Naive thymus-derived CD4-positive, alpha-beta T cell (primary cell): ENCODE measurements at regions of chr1 and their contacts with region 1.

Region 1: GRCh38 chr1:244302889-244303613 is 148.7 kb downstream of the ADSS2 start:
- DNase-seq: no peak
- ATAC-seq: no peak
- H3K4me3 ChIP-seq: no peak overlapping the region
- H3K4me3 Mint-ChIP-seq: no peak overlapping the region
- H3K27ac ChIP-seq: no peak overlapping the region
- H3K27ac Mint-ChIP-seq: peak overlapping the region in 3 of 9 donors; percentile 4 to 43 (median 7)
- H3K4me1 ChIP-seq: peaks cover 0 to 3% of the 10 kb centered on the region in 2 donors
- H3K4me1 Mint-ChIP-seq: peaks cover 5 to 13% (median 7%) of the 10 kb centered on the region in 7 donors
- H3K27me3 ChIP-seq: no peaks in the 10 kb centered on the region
- H3K27me3 Mint-ChIP-seq: peaks cover 0 to 2% (median 0%) of the 10 kb centered on the region in 5 donors

Region 2: GRCh38 chr1:243814718-243815117 is 488.3 kb before region 1 on chr1:
- CTCF ChIA-PET with region 1: interaction called, 10 read pairs
- POLR2A ChIA-PET with region 1: no interaction called
- intact Hi-C with region 1: no loop called
- DNase-seq: no peak
- ATAC-seq: no peak
- H3K4me3 ChIP-seq: no peak overlapping the region
- H3K4me3 Mint-ChIP-seq: no peak overlapping the region
- H3K27ac ChIP-seq: no peak overlapping the region
- H3K27ac Mint-ChIP-seq: peak overlapping the region in 1 of 9 donors; percentile 2
- H3K4me1 ChIP-seq: no peaks in the 10 kb centered on the region
- H3K4me1 Mint-ChIP-seq: peaks cover 2 to 35% (median 23%) of the 10 kb centered on the region in 7 donors
- H3K27me3 ChIP-seq: no peaks in the 10 kb centered on the region
- H3K27me3 Mint-ChIP-seq: no peaks in the 10 kb centered on the region

Region 3: GRCh38 chr1:243864913-243865312 is 438.1 kb before region 1 on chr1:
- CTCF ChIA-PET with region 1: no interaction called
- POLR2A ChIA-PET with region 1: no interaction called
- intact Hi-C with region 1: no loop called
- DNase-seq: no peak
- ATAC-seq: no peak
- H3K4me3 ChIP-seq: no peak overlapping the region
- H3K4me3 Mint-ChIP-seq: no peak overlapping the region
- H3K27ac ChIP-seq: no peak overlapping the region
- H3K27ac Mint-ChIP-seq: no peak overlapping the region
- H3K4me1 ChIP-seq: no peaks in the 10 kb centered on the region
- H3K4me1 Mint-ChIP-seq: no peaks in the 10 kb centered on the region
- H3K27me3 ChIP-seq: no peaks in the 10 kb centered on the region
- H3K27me3 Mint-ChIP-seq: peaks cover 0 to 3% (median 1%) of the 10 kb centered on the region in 5 donors

Region 4: DNA sequence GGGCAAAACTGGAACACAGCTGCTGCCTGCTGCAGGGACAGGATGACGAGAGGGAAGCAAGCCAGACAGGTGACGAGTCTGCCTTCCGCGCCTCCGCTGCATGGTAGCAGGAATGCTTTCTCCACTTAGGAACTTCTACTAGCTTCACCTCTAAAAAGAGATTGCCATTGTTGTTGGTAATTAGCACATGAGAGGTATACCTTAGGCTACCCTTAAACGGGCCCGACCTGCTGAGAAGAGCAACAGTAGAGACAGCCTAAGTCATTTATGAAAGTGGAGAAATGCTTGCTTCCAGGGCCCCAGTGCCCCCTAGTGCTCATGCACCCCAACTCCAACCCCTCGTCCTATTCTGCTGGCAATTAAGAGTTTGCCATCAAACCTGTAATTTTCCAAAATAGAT is 356.1 kb before region 1 on chr1:
- CTCF ChIA-PET with region 1: no interaction called
- POLR2A ChIA-PET with region 1: no interaction called
- intact Hi-C with region 1: loop called in 1 of 2 experiments (anchors 1 kb)
- DNase-seq: peak in 6 of 9 donors; percentile 11 to 52 (median 38)
- ATAC-seq: peak; percentile 76
- H3K4me3 ChIP-seq: no peak overlapping the region
- H3K4me3 Mint-ChIP-seq: no peak overlapping the region
- H3K27ac ChIP-seq: no peak overlapping the region
- H3K27ac Mint-ChIP-seq: peak overlapping the region in 1 of 9 donors; percentile 17
- H3K4me1 ChIP-seq: no peaks in the 10 kb centered on the region
- H3K4me1 Mint-ChIP-seq: no peaks in the 10 kb centered on the region
- H3K27me3 ChIP-seq: no peaks in the 10 kb centered on the region
- H3K27me3 Mint-ChIP-seq: peaks cover 0 to 8% (median 5%) of the 10 kb centered on the region in 5 donors

Region 5: GRCh38 chr1:244289976-244290375 is 13.1 kb before region 1 on chr1:
- CTCF ChIA-PET with region 1: interaction called, 10 read pairs
- POLR2A ChIA-PET with region 1: no interaction called
- intact Hi-C with region 1: no loop called
- DNase-seq: no peak
- ATAC-seq: no peak
- H3K4me3 ChIP-seq: no peak overlapping the region
- H3K4me3 Mint-ChIP-seq: no peak overlapping the region
- H3K27ac ChIP-seq: no peak overlapping the region
- H3K27ac Mint-ChIP-seq: no peak overlapping the region
- H3K4me1 ChIP-seq: no peaks in the 10 kb centered on the region
- H3K4me1 Mint-ChIP-seq: peaks cover 0 to 14% (median 9%) of the 10 kb centered on the region in 7 donors
- H3K27me3 ChIP-seq: no peaks in the 10 kb centered on the region
- H3K27me3 Mint-ChIP-seq: peaks cover 0 to 25% (median 11%) of the 10 kb centered on the region in 5 donors

Region 6: GRCh38 chr1:244319283-244320132 is 16.5 kb after region 1 on chr1:
- CTCF ChIA-PET with region 1: no interaction called
- POLR2A ChIA-PET with region 1: no interaction called
- intact Hi-C with region 1: loop called in 1 of 2 experiments (anchors 1 kb)
- DNase-seq: peak in 1 of 9 donors; percentile 62
- ATAC-seq: peak; percentile 86
- H3K4me3 ChIP-seq: peak overlapping the region; percentile 9
- H3K4me3 Mint-ChIP-seq: peak overlapping the region in 4 of 10 donors; percentile 20 to 76 (median 36)
- H3K27ac ChIP-seq: no peak overlapping the region
- H3K27ac Mint-ChIP-seq: peak overlapping the region in 6 of 9 donors; percentile 20 to 87 (median 53)
- H3K4me1 ChIP-seq: peaks cover 0 to 51% of the 10 kb centered on the region in 2 donors
- H3K4me1 Mint-ChIP-seq: peaks cover 8 to 49% (median 9%) of the 10 kb centered on the region in 7 donors
- H3K27me3 ChIP-seq: no peaks in the 10 kb centered on the region
- H3K27me3 Mint-ChIP-seq: no peaks in the 10 kb centered on the region

Region 7: GRCh38 chr1:244341455-244342450 is 38.7 kb after region 1 on chr1:
- CTCF ChIA-PET with region 1: no interaction called
- POLR2A ChIA-PET with region 1: no interaction called
- intact Hi-C with region 1: no loop called
- DNase-seq: no peak
- ATAC-seq: peak; percentile 67
- H3K4me3 ChIP-seq: no peak overlapping the region
- H3K4me3 Mint-ChIP-seq: peak overlapping the region in 1 of 10 donors; percentile 73
- H3K27ac ChIP-seq: no peak overlapping the region
- H3K27ac Mint-ChIP-seq: peak overlapping the region in 1 of 9 donors; percentile 90
- H3K4me1 ChIP-seq: no peaks in the 10 kb centered on the region
- H3K4me1 Mint-ChIP-seq: peaks cover 0 to 44% (median 4%) of the 10 kb centered on the region in 7 donors
- H3K27me3 ChIP-seq: no peaks in the 10 kb centered on the region
- H3K27me3 Mint-ChIP-seq: peaks cover 0 to 6% (median 5%) of the 10 kb centered on the region in 5 donors